Heart right ventricle (tissue), 16 donors: ENCODE measurements at regions of chr17 and their contacts with region 1.

Region 1: GRCh38 chr17:78925234-78925633 is at the start of gene TIMP2:
- DNase-seq: peak; percentile 90 to 92
- ATAC-seq: peak; percentile 58 to 89 (median 72)
- H3K4me3 ChIP-seq: peak within 1 kb of the TSS; percentile 64 to 86 (median 75)
- H3K27ac ChIP-seq: peak within 1 kb of the TSS; percentile 86 to 97 (median 94)
- H3K4me1 ChIP-seq: peaks cover 13 to 53% (median 40%) of the 10 kb centered on the region in 9 donors
- H3K27me3 ChIP-seq: no peaks in the 10 kb centered on the region
- CTCF ChIP-seq: peak in 7 of 9 donors; percentile 19 to 49 (median 32)
- total RNA-seq, gene TIMP2: 77.5 to 118 (median 99.3) TPM

Region 2: GRCh38 chr17:78865682-78866390 is 59.4 kb before region 1 on chr17:
- intact Hi-C with region 1: loop called in 3 of 10 experiments (anchors 5 to 10 kb)
- DNase-seq: peak; percentile 84 to 87
- ATAC-seq: peak; percentile 68 to 88 (median 83)
- H3K4me3 ChIP-seq: peak overlapping the region in 4 of 10 donors; percentile 13 to 42 (median 26)
- H3K27ac ChIP-seq: peak overlapping the region in 7 of 10 donors; percentile 13 to 60 (median 48)
- H3K4me1 ChIP-seq: peaks cover 3 to 39% (median 12%) of the 10 kb centered on the region in 9 donors
- H3K27me3 ChIP-seq: no peaks in the 10 kb centered on the region
- CTCF ChIP-seq: peak; percentile 85 to 97 (median 93)

Region 3: DNA sequence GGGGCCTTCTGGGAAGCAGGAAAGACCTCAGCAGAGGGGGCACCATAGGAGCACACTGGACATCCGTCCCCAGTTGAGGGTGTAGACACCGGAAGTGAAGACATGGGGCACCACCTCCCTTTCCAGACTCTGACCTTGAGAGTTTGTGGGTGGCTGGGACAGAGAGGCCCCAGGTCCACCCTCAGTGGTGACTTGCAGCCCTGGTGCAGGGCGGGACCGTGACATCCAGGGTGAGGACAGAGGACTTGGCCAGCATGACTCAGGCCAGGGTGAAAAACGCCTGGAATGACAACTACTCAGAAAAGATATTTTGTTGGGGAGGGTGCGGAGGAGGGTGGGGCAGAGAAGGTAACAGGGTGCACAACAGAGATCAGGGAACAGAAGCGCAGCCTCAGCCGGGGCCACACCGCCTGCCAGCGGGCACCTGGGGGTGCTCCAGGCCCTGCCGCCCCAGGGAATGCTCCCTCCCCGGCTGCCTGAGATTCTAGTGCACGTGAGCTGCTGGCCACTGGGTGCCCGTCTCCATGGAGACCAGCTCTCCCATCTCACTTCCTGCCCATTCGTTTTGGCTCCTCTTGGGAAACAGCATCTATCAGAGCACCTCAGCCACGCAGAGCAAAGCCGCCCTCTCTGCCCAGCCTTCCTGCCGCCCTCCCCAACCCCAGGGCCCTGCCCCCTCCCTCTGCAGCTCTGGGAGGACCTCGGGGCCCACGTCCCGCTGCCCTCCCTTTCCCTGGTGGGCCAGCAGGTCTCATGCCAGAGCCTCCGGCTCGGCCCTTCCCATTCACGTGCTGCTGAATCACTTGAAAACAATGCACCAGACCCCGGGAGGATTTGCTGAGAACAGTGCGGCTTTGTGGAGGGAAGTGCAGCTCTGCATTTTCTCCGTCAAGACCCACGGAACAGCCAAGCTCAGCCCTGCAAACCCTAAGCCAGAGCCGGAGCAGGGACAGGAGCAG is 41.8 kb before region 1 on chr17:
- intact Hi-C with region 1: loop called in 7 of 10 experiments (anchors 2 to 5 kb)
- DNase-seq: peak; percentile 77 to 85
- ATAC-seq: peak; percentile 59 to 80 (median 72)
- H3K4me3 ChIP-seq: peak overlapping the region in 9 of 10 donors; percentile 14 to 44 (median 36)
- H3K27ac ChIP-seq: peak overlapping the region; percentile 91 to 98 (median 96)
- H3K4me1 ChIP-seq: peaks cover 29 to 84% (median 73%) of the 10 kb centered on the region in 9 donors
- H3K27me3 ChIP-seq: no peaks in the 10 kb centered on the region
- CTCF ChIP-seq: no peak

Region 4: DNA sequence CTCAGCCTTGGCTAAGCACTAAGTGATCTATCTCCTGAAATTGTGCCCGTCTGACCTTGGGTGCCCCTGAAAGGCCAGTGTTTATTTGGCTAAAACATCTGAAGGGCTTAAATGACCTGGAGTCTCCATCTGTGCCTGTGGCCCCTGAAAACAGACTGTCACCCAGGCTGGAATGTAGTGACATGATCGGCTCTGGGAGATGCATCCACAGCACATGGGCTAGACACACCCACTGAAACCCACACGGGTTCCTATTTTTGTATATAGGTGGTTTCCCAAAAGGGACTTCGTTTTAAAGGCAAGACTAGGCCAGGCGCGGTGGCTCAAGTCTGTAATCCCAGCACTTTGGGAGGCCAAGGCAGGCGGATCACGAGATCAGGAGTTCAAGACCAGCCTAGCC is 35.7 kb before region 1 on chr17:
- intact Hi-C with region 1: loop called in 7 of 10 experiments (anchors 2 to 5 kb)
- DNase-seq: no peak
- ATAC-seq: peak in 1 of 8 donors; percentile 25
- H3K4me3 ChIP-seq: no peak overlapping the region
- H3K27ac ChIP-seq: peak overlapping the region in 7 of 10 donors; percentile 12 to 81 (median 25)
- H3K4me1 ChIP-seq: peaks cover 20 to 80% (median 68%) of the 10 kb centered on the region in 9 donors
- H3K27me3 ChIP-seq: no peaks in the 10 kb centered on the region
- CTCF ChIP-seq: no peak

Region 5: DNA sequence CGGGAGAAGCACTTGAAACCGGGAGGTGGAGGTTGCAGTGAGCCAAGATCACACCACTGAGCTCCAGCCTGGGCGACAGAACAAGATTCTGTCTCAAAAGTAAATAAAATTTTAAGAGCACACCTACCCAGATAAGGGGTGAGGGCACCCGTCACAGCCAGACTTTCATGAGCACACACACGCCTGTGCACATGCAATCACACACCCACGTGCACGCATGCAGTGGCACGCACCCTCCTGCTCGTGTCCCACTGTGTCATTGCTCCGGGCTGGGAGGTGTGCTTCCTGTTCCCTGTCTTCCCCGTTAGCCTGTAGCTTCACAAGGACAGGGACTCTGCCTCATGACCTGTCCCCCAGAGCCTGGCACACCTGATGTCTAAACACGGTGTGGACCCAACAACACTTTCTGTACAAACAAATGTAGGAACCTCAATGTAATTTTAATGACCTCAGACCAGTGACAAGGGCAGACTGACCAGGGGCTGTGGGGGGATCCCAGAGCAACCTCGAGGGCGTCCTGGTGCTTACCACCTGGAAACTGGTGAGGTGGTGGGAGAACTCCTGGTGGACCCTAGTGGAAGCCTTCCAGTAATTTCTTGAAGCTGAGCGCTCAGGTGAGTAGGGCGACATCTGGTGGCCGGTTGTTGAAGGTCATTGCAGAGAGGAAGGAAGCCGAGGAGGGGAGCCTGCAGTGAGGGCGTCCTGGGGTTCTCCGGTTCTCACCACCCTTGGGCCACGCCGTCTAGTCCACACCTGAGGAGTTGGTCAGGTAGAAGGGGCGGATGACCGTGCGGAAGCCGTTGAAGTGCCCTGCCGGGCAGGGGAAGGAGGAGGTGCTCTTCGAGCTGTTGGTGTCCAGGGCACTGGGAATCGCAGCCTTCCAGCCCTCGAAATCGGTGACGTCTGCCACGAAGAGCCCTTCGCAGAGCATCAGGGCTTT is 45.9 kb after region 1 on chr17:
- intact Hi-C with region 1: loop called in 4 of 10 experiments (anchors 5 kb)
- DNase-seq: peak; percentile 83 to 87
- ATAC-seq: peak; percentile 23 to 58 (median 46)
- H3K4me3 ChIP-seq: peak overlapping the region in 2 of 10 donors; percentile 6 to 19
- H3K27ac ChIP-seq: peak overlapping the region in 9 of 10 donors; percentile 23 to 68 (median 54)
- H3K4me1 ChIP-seq: peaks cover 3 to 52% (median 32%) of the 10 kb centered on the region in 9 donors
- H3K27me3 ChIP-seq: no peaks in the 10 kb centered on the region
- CTCF ChIP-seq: peak; percentile 82 to 94 (median 90)

Region 6: DNA sequence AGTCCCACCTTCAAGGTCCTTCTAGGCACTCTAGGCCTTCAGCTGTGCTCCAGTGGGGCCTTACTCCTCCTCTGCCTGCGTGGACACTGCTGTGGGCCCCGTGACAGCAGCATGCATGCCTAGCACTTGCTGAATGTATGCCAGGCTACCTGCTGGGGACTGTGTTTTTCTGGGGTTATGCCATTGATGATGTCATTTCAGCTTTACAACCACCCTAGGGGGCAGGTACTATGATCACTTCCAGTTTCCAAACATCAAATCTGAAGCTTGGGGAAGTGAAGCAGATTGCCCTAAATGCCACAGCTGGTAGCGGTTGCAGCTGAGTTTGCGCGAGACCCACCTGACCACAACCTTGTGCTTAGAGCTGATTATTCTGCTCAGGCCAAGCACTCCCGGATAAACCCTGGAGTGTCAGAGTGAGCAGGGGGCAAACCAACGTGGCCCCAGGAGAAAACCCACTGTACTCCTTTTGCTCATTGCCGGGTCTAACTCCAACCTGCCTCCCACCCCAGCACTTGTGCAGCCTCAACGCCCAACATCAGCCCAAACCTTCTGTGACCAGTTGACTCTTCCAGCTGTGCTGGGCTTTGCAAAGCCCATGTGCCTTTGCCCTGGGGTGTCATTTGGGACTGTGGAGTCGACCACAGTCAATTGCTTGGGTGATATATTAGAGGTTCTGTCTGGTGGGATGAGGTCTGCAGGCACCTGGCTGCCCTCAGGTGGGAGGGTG is 317.8 kb after region 1 on chr17:
- intact Hi-C with region 1: no loop called
- DNase-seq: no peak
- ATAC-seq: no peak
- H3K4me3 ChIP-seq: no peak overlapping the region
- H3K27ac ChIP-seq: no peak overlapping the region
- H3K4me1 ChIP-seq: no peaks in the 10 kb centered on the region
- H3K27me3 ChIP-seq: peaks cover 0 to 66% (median 9%) of the 10 kb centered on the region in 7 donors
- CTCF ChIP-seq: no peak